ENCODE measurements at regions of chr16 and their contacts with region 1.

Region 1: GRCh38 chr16:48623304-48624016 is 13.5 kb upstream of the N4BP1 start:
- DNase-seq: peak; percentile 64 to 92 (median 79)
- ATAC-seq: peak; percentile 99
- H3K4me3 ChIP-seq: peak overlapping the region; percentile 58
- H3K4me3 Mint-ChIP-seq: peak overlapping the region; percentile 88
- H3K27ac ChIP-seq: no peak overlapping the region
- H3K27ac Mint-ChIP-seq: peak overlapping the region; percentile 84
- H3K4me1 ChIP-seq: peaks cover 29% of the 10 kb centered on the region
- H3K4me1 Mint-ChIP-seq: peaks cover 33% of the 10 kb centered on the region
- H3K27me3 ChIP-seq: no peaks in the 10 kb centered on the region
- H3K27me3 Mint-ChIP-seq: no peaks in the 10 kb centered on the region
- CTCF ChIP-seq: peak; percentile 99

Region 2: GRCh38 chr16:48100696-48101674 is 522.5 kb before region 1 on chr16:
- CTCF ChIA-PET with region 1: no interaction called
- POLR2A ChIA-PET with region 1: no interaction called
- intact Hi-C with region 1: no loop called
- DNase-seq: no peak
- ATAC-seq: no peak
- H3K4me3 ChIP-seq: no peak overlapping the region
- H3K4me3 Mint-ChIP-seq: no peak overlapping the region
- H3K27ac ChIP-seq: no peak overlapping the region
- H3K27ac Mint-ChIP-seq: no peak overlapping the region
- H3K4me1 ChIP-seq: peaks cover 4% of the 10 kb centered on the region
- H3K4me1 Mint-ChIP-seq: no peaks in the 10 kb centered on the region
- H3K27me3 ChIP-seq: peaks cover 0 to 5% of the 10 kb centered on the region in 2 experiments
- H3K27me3 Mint-ChIP-seq: peaks cover 11% of the 10 kb centered on the region
- CTCF ChIP-seq: no peak

Region 3: DNA sequence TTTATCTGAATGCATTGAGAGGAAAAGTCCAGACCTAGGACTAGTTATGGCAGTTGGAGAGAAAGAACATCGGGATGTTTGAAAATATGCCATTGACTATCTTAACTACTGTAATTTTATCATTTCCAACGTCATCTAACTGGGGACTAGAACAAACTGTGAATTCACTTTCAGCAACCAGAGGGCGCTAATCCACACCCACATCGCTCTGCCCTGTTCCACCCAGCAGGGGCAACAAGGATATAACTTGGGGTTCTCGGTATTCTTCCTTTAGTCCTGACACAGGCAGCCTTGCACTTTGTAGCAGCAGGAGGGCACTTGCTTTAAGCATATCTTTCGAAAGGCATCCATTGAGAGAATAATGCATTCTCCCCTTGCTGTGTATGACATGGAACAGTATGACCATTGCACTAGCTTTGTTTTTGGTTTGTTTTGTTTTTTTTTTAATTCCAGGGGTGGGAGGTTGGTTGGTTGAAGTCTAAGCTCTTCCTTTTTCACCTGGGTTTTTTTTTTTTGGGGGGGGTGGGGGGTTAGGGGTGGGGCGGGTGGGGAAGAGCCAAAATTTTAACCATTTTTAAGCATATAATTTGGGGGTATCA is 269.8 kb before region 1 on chr16:
- CTCF ChIA-PET with region 1: interaction called, 42 read pairs
- POLR2A ChIA-PET with region 1: interaction called, 26 read pairs
- intact Hi-C with region 1: loop called (anchors 1 kb)
- DNase-seq: peak; percentile 47 to 90 (median 59)
- ATAC-seq: peak; percentile 98
- H3K4me3 ChIP-seq: no peak overlapping the region
- H3K4me3 Mint-ChIP-seq: no peak overlapping the region
- H3K27ac ChIP-seq: no peak overlapping the region
- H3K27ac Mint-ChIP-seq: peak overlapping the region; percentile 67
- H3K4me1 ChIP-seq: peaks cover 2% of the 10 kb centered on the region
- H3K4me1 Mint-ChIP-seq: peaks cover 12% of the 10 kb centered on the region
- H3K27me3 ChIP-seq: no peaks in the 10 kb centered on the region
- H3K27me3 Mint-ChIP-seq: no peaks in the 10 kb centered on the region
- CTCF ChIP-seq: peak; percentile 85

Region 4: GRCh38 chr16:48385272-48386150 is 237.9 kb before region 1 on chr16 and contains the start of gene SIAH1:
- CTCF ChIA-PET with region 1: interaction called, 15 read pairs
- POLR2A ChIA-PET with region 1: interaction called, 10 read pairs
- intact Hi-C with region 1: no loop called
- DNase-seq: peak; percentile 73 to 96 (median 86)
- ATAC-seq: peak; percentile 80
- H3K4me3 ChIP-seq: peak within 1 kb of the TSS; percentile 81
- H3K4me3 Mint-ChIP-seq: peak within 1 kb of the TSS; percentile 98
- H3K27ac ChIP-seq: peak within 1 kb of the TSS in 1 of 2 donors; percentile 46
- H3K27ac Mint-ChIP-seq: peak within 1 kb of the TSS; percentile 92
- H3K4me1 ChIP-seq: peaks cover 12% of the 10 kb centered on the region
- H3K4me1 Mint-ChIP-seq: peaks cover 27% of the 10 kb centered on the region
- H3K27me3 ChIP-seq: no peaks in the 10 kb centered on the region
- H3K27me3 Mint-ChIP-seq: no peaks in the 10 kb centered on the region
- CTCF ChIP-seq: no peak
- total RNA-seq, gene SIAH1: 40.9 to 43.0 TPM

Region 5: GRCh38 chr16:48542020-48542473 is 81.4 kb before region 1 on chr16:
- CTCF ChIA-PET with region 1: interaction called, 55 read pairs
- POLR2A ChIA-PET with region 1: interaction called, 3 read pairs
- intact Hi-C with region 1: loop called in 1 of 2 experiments (anchors 2 kb)
- DNase-seq: peak in 3 of 14 experiments; percentile 35 to 54 (median 44)
- ATAC-seq: peak; percentile 54
- H3K4me3 ChIP-seq: no peak overlapping the region
- H3K4me3 Mint-ChIP-seq: no peak overlapping the region
- H3K27ac ChIP-seq: no peak overlapping the region
- H3K27ac Mint-ChIP-seq: peak overlapping the region; percentile 24
- H3K4me1 ChIP-seq: peaks cover 4% of the 10 kb centered on the region
- H3K4me1 Mint-ChIP-seq: peaks cover 7% of the 10 kb centered on the region
- H3K27me3 ChIP-seq: no peaks in the 10 kb centered on the region
- H3K27me3 Mint-ChIP-seq: no peaks in the 10 kb centered on the region
- CTCF ChIP-seq: no peak

Region 6: DNA sequence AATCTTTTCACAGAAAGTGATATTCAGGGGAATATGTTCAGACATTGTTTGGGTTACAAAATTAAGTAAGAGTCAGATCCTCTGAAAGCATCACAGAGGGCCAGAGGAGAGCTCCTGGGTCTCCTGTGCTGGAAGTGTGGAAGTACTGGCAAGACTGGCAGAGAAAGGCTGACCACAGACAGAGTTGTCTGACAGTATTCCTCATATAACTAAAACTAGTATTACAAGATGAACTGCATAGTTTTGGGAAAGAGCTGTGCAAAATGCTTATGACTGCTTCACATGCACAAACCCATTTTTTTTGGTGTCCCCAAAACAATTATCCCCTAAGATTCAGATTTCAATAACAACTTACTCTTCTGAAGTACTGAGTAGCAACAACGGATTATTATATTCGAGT is 48.7 kb before region 1 on chr16:
- CTCF ChIA-PET with region 1: interaction called, 18 read pairs
- POLR2A ChIA-PET with region 1: interaction called, 3 read pairs
- intact Hi-C with region 1: no loop called
- DNase-seq: no peak
- ATAC-seq: no peak
- H3K4me3 ChIP-seq: no peak overlapping the region
- H3K4me3 Mint-ChIP-seq: no peak overlapping the region
- H3K27ac ChIP-seq: no peak overlapping the region
- H3K27ac Mint-ChIP-seq: no peak overlapping the region
- H3K4me1 ChIP-seq: peaks cover 27% of the 10 kb centered on the region
- H3K4me1 Mint-ChIP-seq: peaks cover 86% of the 10 kb centered on the region
- H3K27me3 ChIP-seq: no peaks in the 10 kb centered on the region
- H3K27me3 Mint-ChIP-seq: no peaks in the 10 kb centered on the region
- CTCF ChIP-seq: no peak

Region 7: GRCh38 chr16:48596326-48596725 is 27.1 kb before region 1 on chr16:
- CTCF ChIA-PET with region 1: interaction called, 101 read pairs
- POLR2A ChIA-PET with region 1: interaction called, 6 read pairs
- intact Hi-C with region 1: no loop called
- DNase-seq: peak in 4 of 14 experiments; percentile 23 to 48 (median 32)
- ATAC-seq: no peak
- H3K4me3 ChIP-seq: no peak overlapping the region
- H3K4me3 Mint-ChIP-seq: no peak overlapping the region
- H3K27ac ChIP-seq: no peak overlapping the region
- H3K27ac Mint-ChIP-seq: no peak overlapping the region
- H3K4me1 ChIP-seq: peaks cover 30% of the 10 kb centered on the region
- H3K4me1 Mint-ChIP-seq: peaks cover 75% of the 10 kb centered on the region
- H3K27me3 ChIP-seq: no peaks in the 10 kb centered on the region
- H3K27me3 Mint-ChIP-seq: no peaks in the 10 kb centered on the region
- CTCF ChIP-seq: no peak

Region 8: DNA sequence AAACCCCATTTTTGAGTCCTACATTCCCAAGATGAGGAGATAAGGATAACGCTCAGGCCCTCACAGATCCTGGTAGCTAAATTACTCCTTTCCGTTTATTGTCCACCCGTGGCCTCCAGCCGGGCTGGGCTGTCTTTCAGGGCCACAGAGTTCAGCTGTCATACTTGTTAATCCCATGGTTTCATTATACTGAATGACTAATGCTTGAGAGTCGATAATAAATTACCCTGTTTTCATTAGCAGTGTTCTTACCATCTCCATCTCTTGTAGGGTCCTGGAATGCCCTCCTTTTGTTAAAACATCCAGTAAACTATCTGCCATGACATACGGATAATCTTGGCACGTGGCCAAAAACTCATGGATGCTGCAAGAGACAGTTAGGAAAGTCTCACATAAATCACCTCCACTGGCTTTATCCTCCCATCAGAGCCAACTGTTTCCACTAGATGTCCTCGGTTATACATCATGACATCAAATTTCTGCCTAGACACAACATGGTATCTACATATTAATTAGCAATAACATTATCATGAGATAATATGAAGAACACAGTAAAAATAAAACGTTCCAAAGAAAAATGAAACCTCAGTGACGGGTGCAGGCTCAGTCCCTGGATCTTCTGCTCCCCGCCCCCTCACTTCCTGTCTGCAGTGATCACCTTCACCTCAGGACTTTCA is 1700.0 kb after region 1 on chr16:
- CTCF ChIA-PET with region 1: no interaction called
- POLR2A ChIA-PET with region 1: no interaction called
- intact Hi-C with region 1: no loop called
- DNase-seq: peak in 2 of 14 experiments; percentile 42 to 58
- ATAC-seq: no peak
- H3K4me3 ChIP-seq: no peak overlapping the region
- H3K4me3 Mint-ChIP-seq: no peak overlapping the region
- H3K27ac ChIP-seq: peak overlapping the region; percentile 7 to 22
- H3K27ac Mint-ChIP-seq: peak overlapping the region; percentile 84
- H3K4me1 ChIP-seq: peaks cover 31% of the 10 kb centered on the region
- H3K4me1 Mint-ChIP-seq: peaks cover 53% of the 10 kb centered on the region
- H3K27me3 ChIP-seq: no peaks in the 10 kb centered on the region
- H3K27me3 Mint-ChIP-seq: no peaks in the 10 kb centered on the region
- CTCF ChIP-seq: peak; percentile 43

Measured in CD4-positive, alpha-beta T cell (primary cell).